Activated T-helper 1 cell treated with anti-CD3 and anti-CD28 coated beads, Interleukin-12 subunit alpha, Interleukin-12 subunit beta, Interleukin-2, Interleukin-4 antibody, amounts not matched to agents 30 ng/mL and 10 ng/mL and 1 ng/mL, durations not matched to agents 14 hours and 24 hours and 36 hours (primary cell): ENCODE measurements at regions of chr5 and their contacts with region 1.

Region 1: DNA sequence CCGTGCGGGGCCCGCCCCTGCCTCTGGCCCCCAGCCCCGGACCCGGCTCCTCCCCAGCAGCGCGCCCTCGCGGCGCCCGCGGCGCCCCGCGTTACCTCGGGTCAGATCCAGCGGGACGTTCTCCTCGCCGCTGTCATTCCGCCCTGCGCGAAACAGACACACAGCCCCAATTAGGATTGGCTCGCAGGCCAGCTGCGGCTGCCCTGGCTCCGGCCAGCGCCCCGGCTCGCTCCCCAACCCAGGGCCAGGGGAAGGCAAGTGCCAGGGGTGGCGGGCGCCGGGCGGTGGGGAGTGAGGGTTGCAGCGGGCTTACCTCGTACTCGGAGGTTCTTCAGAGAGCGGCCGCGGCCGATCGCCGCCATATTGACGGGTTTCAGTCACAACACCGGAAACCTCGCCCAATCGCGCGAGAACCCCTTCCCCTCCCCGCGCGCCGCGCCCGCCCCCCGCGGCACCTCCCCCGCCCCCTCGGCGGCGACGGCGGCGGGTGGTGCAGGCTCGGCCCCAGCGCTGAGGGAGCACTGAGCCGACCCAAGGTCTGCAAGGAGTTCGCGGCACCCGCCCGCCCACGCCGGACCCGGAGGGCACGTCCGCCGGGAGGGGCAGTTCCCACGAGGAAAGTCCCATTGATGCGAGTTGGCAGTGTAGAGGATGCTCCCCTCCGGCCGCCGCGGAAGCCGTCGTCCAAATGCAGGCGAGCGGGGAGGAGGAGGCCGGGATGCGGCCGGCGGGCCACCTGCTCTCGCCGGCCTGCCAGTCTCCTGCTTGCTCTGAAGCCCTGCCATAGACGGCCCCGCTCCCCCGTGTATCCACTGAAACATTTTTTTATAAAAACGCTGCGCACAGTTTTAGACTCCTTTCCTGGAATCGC is at the start of gene RICTOR:
- DNase-seq: peak; percentile 88
- H3K4me3 Mint-ChIP-seq: peak within 1 kb of the TSS; percentile 94
- H3K27ac Mint-ChIP-seq: peak within 1 kb of the TSS; percentile 95
- H3K4me1 Mint-ChIP-seq: peaks cover 52% of the 10 kb centered on the region
- H3K27me3 Mint-ChIP-seq: peaks cover 11% of the 10 kb centered on the region
- total RNA-seq, gene RICTOR: 30.1 and 33.9 TPM in 2 replicates

Region 2: DNA sequence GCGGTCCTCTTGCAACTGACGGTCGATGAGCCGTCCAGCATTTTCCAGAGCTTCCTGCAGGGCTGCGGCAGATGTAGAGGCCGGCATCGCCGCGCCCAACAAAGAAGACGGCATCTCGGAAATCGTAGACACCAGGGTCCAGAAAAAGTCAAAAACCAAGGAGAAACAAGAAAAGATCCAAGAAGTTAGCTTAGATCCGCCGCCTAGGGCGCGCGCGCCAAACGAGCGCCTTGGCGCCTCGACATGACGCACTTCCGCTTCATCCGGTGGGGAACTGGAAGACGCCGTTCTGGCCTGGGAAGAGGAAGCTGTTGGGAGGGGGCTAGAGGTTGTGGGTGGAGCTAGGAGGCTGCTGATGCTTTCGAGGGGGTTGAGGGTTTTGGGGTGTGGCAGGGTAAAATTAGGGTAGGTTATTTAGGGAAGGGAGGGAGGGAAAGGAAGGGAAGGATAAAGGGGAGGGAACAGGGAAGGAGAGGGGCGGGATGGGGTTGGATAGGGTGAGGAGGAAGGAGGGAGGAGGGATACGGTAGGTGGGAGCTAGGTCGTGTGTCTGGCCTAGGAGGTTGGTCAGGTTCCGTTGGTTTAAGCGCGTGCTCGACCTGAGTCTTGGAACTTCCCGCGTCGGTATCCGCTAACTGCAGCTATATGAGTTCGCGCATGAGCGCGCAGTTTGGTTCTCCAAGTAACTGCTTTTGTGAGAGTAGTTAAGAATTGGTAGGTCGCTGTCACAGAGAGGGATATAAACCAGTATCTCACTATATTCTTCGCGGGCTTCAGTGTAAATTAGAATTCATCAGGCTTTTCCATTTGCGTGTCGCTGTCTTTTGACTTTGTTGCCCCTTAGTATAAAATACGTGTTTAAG is 1703.2 kb before region 1 on chr5 and contains the start of gene NUP155:
- intact Hi-C with region 1: loop called (anchors 2 kb)
- DNase-seq: peak; percentile 87
- H3K4me3 Mint-ChIP-seq: peak within 1 kb of the TSS; percentile 94
- H3K27ac Mint-ChIP-seq: peak within 1 kb of the TSS; percentile 97
- H3K4me1 Mint-ChIP-seq: peaks cover 37% of the 10 kb centered on the region
- H3K27me3 Mint-ChIP-seq: no peaks in the 10 kb centered on the region
- total RNA-seq, gene NUP155: 72.5 and 82.1 TPM in 2 replicates

Region 3: GRCh38 chr5:38556599-38557305 is 517.5 kb before region 1 on chr5 and contains the start of gene LIFR:
- intact Hi-C with region 1: loop called (anchors 5 kb)
- DNase-seq: peak; percentile 47
- H3K4me3 Mint-ChIP-seq: peak within 1 kb of the TSS; percentile 85
- H3K27ac Mint-ChIP-seq: peak within 1 kb of the TSS; percentile 8
- H3K4me1 Mint-ChIP-seq: peaks cover 5% of the 10 kb centered on the region
- H3K27me3 Mint-ChIP-seq: peaks cover 68% of the 10 kb centered on the region
- total RNA-seq, gene LIFR: 0.10 and 0.20 TPM in 2 replicates

Region 4: GRCh38 chr5:38905516-38905915 is 168.7 kb before region 1 on chr5:
- intact Hi-C with region 1: no loop called
- DNase-seq: no peak
- H3K4me3 Mint-ChIP-seq: no peak overlapping the region
- H3K27ac Mint-ChIP-seq: no peak overlapping the region
- H3K4me1 Mint-ChIP-seq: no peaks in the 10 kb centered on the region
- H3K27me3 Mint-ChIP-seq: peaks cover 6% of the 10 kb centered on the region

Region 5: DNA sequence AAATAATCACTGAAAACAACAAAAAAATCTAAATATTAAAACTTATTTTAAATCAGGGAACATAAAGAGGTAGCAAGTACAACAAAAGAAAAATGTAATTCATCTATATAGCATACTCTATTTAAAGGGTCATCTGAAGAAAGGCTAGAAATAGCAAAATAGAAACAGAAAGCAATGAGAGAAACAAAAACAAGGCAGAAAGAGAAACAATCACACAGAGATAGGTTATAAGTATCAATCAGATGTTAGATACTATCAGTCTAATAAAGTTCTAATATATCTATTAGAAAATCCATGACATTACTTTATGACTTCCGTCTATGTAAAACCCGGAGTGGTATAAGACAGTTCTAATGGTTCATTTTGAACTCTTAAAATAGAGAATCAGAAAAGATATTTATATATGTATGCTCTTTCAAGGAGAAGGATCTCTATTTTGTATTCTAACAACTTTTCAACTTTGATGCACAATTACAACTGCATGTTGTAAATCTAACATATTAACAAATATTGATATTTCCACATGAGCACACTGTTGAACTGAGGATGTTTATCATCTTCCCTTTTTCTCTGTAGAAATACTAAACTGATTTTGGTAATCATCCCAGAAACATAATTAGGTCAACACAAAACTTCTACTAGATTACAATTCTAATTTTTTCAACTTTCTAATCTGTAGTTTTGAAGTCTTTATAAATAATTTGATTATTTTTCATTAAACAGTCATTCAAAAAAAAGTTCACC is 15.9 kb before region 1 on chr5:
- intact Hi-C with region 1: loop called (anchors 1 kb)
- DNase-seq: no peak
- H3K4me3 Mint-ChIP-seq: peak overlapping the region; percentile 69
- H3K27ac Mint-ChIP-seq: peak overlapping the region; percentile 71
- H3K4me1 Mint-ChIP-seq: peaks cover 61% of the 10 kb centered on the region
- H3K27me3 Mint-ChIP-seq: no peaks in the 10 kb centered on the region

Region 6: DNA sequence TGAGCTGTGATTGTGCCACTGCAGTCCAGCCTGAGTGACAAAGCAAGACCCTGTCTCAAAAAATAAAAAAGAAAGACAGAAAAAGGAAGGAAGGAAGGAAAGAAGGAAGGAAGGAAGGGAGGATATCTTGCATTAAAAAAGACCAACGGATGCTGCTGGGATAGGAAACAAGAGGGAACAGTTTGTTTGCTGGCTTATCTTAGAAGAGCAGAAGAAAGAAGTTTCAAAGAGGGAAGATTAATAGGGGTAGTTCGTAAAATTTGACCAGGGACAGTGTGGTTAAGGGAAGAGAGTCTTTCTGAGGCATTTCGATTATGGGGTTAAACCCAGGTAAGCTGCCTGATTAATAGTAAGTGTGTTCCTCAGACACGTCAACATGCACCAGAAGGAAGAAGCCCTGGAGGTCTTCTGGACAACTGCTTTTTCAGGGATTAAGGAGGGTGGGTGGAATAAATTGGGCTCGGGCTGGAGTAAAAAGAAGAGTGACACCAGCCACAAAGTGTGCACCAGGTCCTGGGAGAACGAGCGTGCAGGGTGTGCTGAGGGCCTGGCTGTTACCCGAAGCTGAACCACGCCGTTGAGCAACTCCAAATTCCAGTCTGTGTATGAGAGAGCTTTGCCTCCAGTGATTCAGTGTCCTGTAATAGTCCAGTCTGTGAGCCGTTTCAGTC is 120.3 kb after region 1 on chr5:
- intact Hi-C with region 1: loop called (anchors 5 kb)
- DNase-seq: no peak
- H3K4me3 Mint-ChIP-seq: peak overlapping the region; percentile 83
- H3K27ac Mint-ChIP-seq: peak overlapping the region; percentile 90
- H3K4me1 Mint-ChIP-seq: peaks cover 87% of the 10 kb centered on the region
- H3K27me3 Mint-ChIP-seq: no peaks in the 10 kb centered on the region

Region 7: DNA sequence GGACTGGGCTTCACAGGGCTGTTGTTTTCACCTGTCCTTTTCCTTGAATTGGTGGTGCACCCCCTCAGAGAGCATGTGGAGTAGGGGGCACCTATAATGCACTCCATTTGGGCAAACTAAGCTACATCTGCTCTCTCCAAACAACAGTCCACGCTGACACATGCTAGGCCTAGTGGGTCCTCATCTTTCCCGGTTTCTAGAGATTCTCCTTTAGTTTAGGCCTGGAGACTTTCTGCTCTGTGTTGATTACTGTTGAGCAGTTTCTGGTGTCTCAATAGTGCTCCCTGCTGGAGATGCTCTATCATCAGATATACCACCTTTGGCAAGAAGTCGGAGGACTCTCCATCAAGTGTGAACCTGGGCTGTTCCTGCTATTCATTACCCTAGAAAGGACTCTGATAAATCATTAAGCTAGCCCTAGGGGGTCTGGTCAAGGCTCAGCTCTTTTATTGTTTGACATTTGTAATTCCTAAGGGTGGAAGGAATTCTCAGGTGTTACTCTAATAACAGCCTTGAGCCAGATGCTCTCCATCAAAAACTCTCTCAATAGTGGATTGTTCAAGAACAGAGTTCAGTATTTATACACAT is 209.1 kb after region 1 on chr5:
- intact Hi-C with region 1: loop called (anchors 2 kb)
- DNase-seq: peak; percentile 54
- H3K4me3 Mint-ChIP-seq: no peak overlapping the region
- H3K27ac Mint-ChIP-seq: no peak overlapping the region
- H3K4me1 Mint-ChIP-seq: peaks cover 22% of the 10 kb centered on the region
- H3K27me3 Mint-ChIP-seq: peaks cover 12% of the 10 kb centered on the region

Region 8: GRCh38 chr5:39355324-39355723 is 281.1 kb after region 1 on chr5:
- intact Hi-C with region 1: no loop called
- DNase-seq: no peak
- H3K4me3 Mint-ChIP-seq: no peak overlapping the region
- H3K27ac Mint-ChIP-seq: no peak overlapping the region
- H3K4me1 Mint-ChIP-seq: no peaks in the 10 kb centered on the region
- H3K27me3 Mint-ChIP-seq: no peaks in the 10 kb centered on the region

Region 9: GRCh38 chr5:40834849-40835787 is 1760.9 kb after region 1 on chr5 and contains the start of gene RPL37:
- intact Hi-C with region 1: loop called (anchors 10 kb)
- DNase-seq: peak; percentile 89
- H3K4me3 Mint-ChIP-seq: peak within 1 kb of the TSS; percentile 95
- H3K27ac Mint-ChIP-seq: peak within 1 kb of the TSS; percentile 90
- H3K4me1 Mint-ChIP-seq: peaks cover 45% of the 10 kb centered on the region
- H3K27me3 Mint-ChIP-seq: no peaks in the 10 kb centered on the region
- total RNA-seq, gene RPL37: 1,451 and 1,473 TPM in 2 replicates